Activated CD8-positive, alpha-beta T cell treated with anti-CD3 and anti-CD28 coated beads, Interleukin-2, amount 10 ng/mL, durations not matched to agents 7 days and 5 days (primary cell): ENCODE measurements at regions of chr19 and their contacts with region 1.

Region 1: DNA sequence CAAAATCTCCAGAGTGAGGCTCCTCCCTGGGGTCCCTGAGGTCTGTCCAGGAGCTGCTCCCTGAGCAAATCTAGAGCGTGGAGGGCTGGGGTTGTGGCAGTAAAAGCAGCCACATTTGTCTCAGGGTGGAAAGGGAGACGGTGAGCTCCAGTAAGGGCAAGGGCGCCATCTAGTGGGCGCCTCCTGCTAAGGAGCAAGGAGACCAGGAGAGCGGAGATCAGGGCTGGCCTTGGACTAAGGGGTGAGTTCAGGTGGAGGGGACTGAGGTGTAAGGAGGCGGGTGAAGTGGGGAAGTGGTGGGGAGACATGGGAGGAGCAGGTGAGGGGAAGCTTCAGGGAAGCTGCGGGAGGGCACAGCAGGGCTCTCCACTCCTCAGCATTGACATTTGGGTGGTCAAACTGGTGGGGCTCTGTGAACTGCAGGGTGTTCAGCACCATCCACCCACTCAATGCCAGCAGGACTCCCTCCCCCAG is 5.3 kb upstream of the CEACAM21 start:
- DNase-seq: peak; percentile 88
- ATAC-seq: peak; percentile 98
- H3K4me3 Mint-ChIP-seq: no peak overlapping the region
- H3K27ac Mint-ChIP-seq: no peak overlapping the region
- H3K4me1 Mint-ChIP-seq: peaks cover 15% of the 10 kb centered on the region
- H3K27me3 Mint-ChIP-seq: peaks cover 13% of the 10 kb centered on the region

Region 2: DNA sequence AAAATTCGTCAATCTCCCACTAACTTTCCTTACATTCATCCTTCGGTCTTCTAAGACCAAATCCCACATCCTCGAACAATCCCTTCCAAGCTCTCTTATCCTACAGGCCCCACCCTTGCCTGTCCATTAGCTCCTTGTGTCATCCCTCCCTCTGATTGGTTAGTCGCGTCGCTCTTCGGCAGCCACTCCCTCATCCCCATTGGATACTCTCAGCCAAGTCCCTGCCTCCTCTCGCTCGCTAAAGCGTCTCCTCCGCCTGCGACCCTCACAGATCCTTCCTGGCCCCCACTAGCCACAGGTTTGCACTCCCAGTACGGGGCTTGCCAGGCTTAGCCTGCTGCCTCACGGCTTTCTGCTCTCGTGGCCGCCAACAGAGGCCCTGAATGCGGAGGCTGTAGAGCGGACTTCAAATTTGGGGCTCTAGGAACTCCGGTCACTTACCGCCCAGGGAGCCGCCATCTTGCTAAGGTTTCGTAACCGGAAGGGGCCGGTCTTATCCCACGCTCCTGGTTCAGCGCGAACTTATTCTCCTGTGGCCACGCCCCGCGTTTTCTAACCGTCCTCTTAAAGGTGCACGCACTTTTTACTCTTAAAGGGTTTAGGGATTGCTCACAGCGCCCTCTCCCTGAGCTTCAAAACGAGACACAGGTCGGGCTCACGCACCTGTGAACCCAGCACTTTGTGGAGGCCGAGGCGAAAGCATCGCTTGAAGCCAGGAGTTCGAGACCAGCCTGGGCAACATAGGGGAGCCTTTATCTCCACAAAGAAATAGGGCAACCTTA is 131.0 kb before region 1 on chr19 and contains the start of gene DMAC2:
- CTCF ChIA-PET with region 1: interaction called, 21 read pairs
- POLR2A ChIA-PET with region 1: no interaction called
- DNase-seq: peak; percentile 99
- ATAC-seq: peak; percentile 96
- H3K4me3 Mint-ChIP-seq: no peak within 1 kb of the TSS
- H3K27ac Mint-ChIP-seq: no peak within 1 kb of the TSS
- H3K4me1 Mint-ChIP-seq: peaks cover 25% of the 10 kb centered on the region
- H3K27me3 Mint-ChIP-seq: peaks cover 8% of the 10 kb centered on the region
- total RNA-seq, gene DMAC2: 44.8 to 47.0 TPM

Region 3: DNA sequence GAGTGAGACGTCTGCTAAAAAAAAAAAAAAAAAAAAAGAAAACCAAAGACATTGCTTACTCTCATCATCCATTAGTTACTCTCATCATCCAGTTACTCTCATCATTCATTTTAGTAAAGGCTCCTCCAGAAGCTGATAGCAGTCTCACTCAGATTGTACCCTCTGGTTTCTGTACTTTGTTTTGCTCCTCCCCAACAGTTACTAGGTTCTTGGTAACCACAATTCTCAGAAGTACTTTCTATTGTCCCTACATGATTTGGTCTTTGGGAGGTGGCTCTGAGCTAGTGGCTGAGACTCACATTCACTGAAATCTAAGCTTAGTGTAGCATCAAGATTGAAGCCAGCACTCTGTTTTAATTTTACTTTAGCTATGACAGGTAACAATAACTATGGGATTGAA is 113.4 kb before region 1 on chr19:
- CTCF ChIA-PET with region 1: interaction called, 21 read pairs
- POLR2A ChIA-PET with region 1: no interaction called
- DNase-seq: peak; percentile 46
- ATAC-seq: peak; percentile 93
- H3K4me3 Mint-ChIP-seq: peak overlapping the region; percentile 34
- H3K27ac Mint-ChIP-seq: peak overlapping the region; percentile 81
- H3K4me1 Mint-ChIP-seq: peaks cover 33% of the 10 kb centered on the region
- H3K27me3 Mint-ChIP-seq: peaks cover 26% of the 10 kb centered on the region

Region 4: GRCh38 chr19:41541990-41542584 is 28.6 kb before region 1 on chr19:
- CTCF ChIA-PET with region 1: interaction called, 66 read pairs
- POLR2A ChIA-PET with region 1: no interaction called
- DNase-seq: peak; percentile 81
- ATAC-seq: no peak
- H3K4me3 Mint-ChIP-seq: no peak overlapping the region
- H3K27ac Mint-ChIP-seq: no peak overlapping the region
- H3K4me1 Mint-ChIP-seq: peaks cover 45% of the 10 kb centered on the region
- H3K27me3 Mint-ChIP-seq: no peaks in the 10 kb centered on the region

Region 5: DNA sequence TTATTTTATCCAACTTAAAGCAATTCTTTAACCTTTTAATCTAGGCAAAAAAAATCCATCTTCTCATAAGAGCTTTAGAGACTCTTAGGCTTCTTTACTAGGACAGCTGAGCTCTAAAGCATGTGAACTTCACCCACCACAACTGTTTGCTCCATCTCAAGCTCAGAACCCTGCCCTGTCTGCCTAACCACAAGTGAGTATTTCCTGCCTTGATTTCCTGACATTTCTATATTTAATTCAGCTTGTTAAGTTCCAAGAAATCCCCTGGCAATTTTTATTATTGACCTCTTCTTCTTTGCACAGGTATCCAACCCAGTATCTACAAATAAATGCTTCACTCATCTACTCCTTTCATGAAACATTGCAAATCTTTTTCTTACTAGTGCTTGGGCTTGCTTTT is 15.8 kb before region 1 on chr19:
- CTCF ChIA-PET with region 1: interaction called, 86 read pairs
- POLR2A ChIA-PET with region 1: no interaction called
- DNase-seq: peak; percentile 57
- ATAC-seq: peak; percentile 69
- H3K4me3 Mint-ChIP-seq: peak overlapping the region; percentile 86
- H3K27ac Mint-ChIP-seq: peak overlapping the region; percentile 74
- H3K4me1 Mint-ChIP-seq: peaks cover 49% of the 10 kb centered on the region
- H3K27me3 Mint-ChIP-seq: peaks cover 6% of the 10 kb centered on the region